ENCODE measurements at regions of chr9 and their contacts with region 1.

Region 1: GRCh38 chr9:137240861-137241489 is at the start of gene TUBB4B:
- DNase-seq: peak; percentile 99
- ATAC-seq: peak; percentile 82
- H3K4me3 Mint-ChIP-seq: peak within 1 kb of the TSS; percentile 88
- H3K27ac Mint-ChIP-seq: peak within 1 kb of the TSS; percentile 91
- H3K4me1 Mint-ChIP-seq: peaks cover 34% of the 10 kb centered on the region
- H3K27me3 Mint-ChIP-seq: no peaks in the 10 kb centered on the region
- CTCF ChIP-seq: no peak
- total RNA-seq, gene TUBB4B: 228 to 230 TPM

Region 2: DNA sequence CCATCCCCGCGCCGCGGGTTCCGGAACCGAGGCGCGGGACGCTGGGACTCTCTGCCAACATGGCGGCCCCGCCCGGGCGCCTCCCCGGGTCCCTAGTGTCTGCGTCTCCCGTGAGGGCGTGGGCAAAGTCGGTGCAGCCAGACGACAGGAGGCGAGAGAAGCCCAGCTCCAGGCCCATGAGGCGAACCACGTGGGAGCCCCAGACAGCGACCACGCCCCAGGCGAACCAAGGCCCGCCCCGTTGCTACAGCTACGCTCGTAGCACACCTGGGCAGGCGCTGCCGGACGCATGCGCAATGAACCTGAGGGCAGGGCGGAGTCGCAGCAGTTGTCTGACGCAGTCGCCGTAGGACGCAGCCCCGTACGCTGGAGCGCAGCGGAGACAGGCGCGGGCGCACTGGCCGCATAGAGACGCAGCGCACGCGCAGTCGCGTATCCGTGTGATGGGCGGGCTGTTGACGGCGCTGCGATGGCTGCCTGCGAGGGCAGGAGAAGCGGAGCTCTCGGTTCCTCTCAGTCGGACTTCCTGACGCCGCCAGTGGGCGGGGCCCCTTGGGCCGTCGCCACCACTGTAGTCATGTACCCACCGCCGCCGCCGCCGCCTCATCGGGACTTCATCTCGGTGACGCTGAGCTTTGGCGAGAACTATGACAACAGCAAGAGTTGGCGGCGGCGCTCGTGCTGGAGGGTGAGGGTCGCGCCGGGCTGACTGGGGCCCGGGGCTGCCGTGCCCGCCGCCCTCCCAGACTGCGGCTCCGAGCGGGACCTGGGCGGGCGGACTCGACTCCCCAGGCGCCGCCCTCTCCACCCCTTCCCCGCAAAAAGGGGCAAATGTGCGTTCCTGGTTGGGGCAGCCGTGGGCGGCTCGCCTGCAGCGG is 154.2 kb before region 1 on chr9 and contains the start of gene MAN1B1:
- CTCF ChIA-PET with region 1: interaction called, 14 read pairs
- POLR2A ChIA-PET with region 1: interaction called, 8 read pairs
- intact Hi-C with region 1: no loop called
- DNase-seq: peak; percentile 100
- ATAC-seq: peak; percentile 86
- H3K4me3 Mint-ChIP-seq: peak within 1 kb of the TSS; percentile 90
- H3K27ac Mint-ChIP-seq: peak within 1 kb of the TSS; percentile 94
- H3K4me1 Mint-ChIP-seq: peaks cover 38% of the 10 kb centered on the region
- H3K27me3 Mint-ChIP-seq: no peaks in the 10 kb centered on the region
- CTCF ChIP-seq: no peak
- total RNA-seq, gene MAN1B1: 31.1 to 33.2 TPM

Region 3: GRCh38 chr9:137114610-137115391 is 126.2 kb before region 1 on chr9 and contains the start of gene DPP7:
- CTCF ChIA-PET with region 1: interaction called, 14 read pairs
- POLR2A ChIA-PET with region 1: interaction called, 4 read pairs
- intact Hi-C with region 1: no loop called
- DNase-seq: peak; percentile 81
- ATAC-seq: peak; percentile 85
- H3K4me3 Mint-ChIP-seq: peak within 1 kb of the TSS; percentile 75
- H3K27ac Mint-ChIP-seq: peak within 1 kb of the TSS; percentile 64
- H3K4me1 Mint-ChIP-seq: peaks cover 10% of the 10 kb centered on the region
- H3K27me3 Mint-ChIP-seq: no peaks in the 10 kb centered on the region
- CTCF ChIP-seq: no peak
- total RNA-seq, gene DPP7: 222 to 227 TPM

Region 4: GRCh38 chr9:137188490-137189296 is 52.3 kb before region 1 on chr9 and contains the starts of genes ANAPC2 and SSNA1:
- CTCF ChIA-PET with region 1: interaction called, 11 read pairs
- POLR2A ChIA-PET with region 1: interaction called, 4 read pairs
- intact Hi-C with region 1: no loop called
- DNase-seq: peak; percentile 92
- ATAC-seq: peak; percentile 84
- H3K4me3 Mint-ChIP-seq: peak within 1 kb of the TSS; percentile 91
- H3K27ac Mint-ChIP-seq: peak within 1 kb of the TSS; percentile 94
- H3K4me1 Mint-ChIP-seq: peaks cover 32% of the 10 kb centered on the region
- H3K27me3 Mint-ChIP-seq: no peaks in the 10 kb centered on the region
- CTCF ChIP-seq: peak; percentile 53
- total RNA-seq, gene ANAPC2: 38.6 to 39.6 TPM
- total RNA-seq, gene SSNA1: 53.3 to 58.4 TPM

Region 5: GRCh38 chr9:137254624-137255447 is 13.9 kb after region 1 on chr9 and contains the start of gene NELFB:
- CTCF ChIA-PET with region 1: interaction called, 19 read pairs
- POLR2A ChIA-PET with region 1: interaction called, 113 read pairs
- intact Hi-C with region 1: no loop called
- DNase-seq: peak; percentile 93
- ATAC-seq: peak; percentile 94
- H3K4me3 Mint-ChIP-seq: peak within 1 kb of the TSS; percentile 83
- H3K27ac Mint-ChIP-seq: peak within 1 kb of the TSS; percentile 79
- H3K4me1 Mint-ChIP-seq: peaks cover 14% of the 10 kb centered on the region
- H3K27me3 Mint-ChIP-seq: no peaks in the 10 kb centered on the region
- CTCF ChIP-seq: no peak
- total RNA-seq, gene NELFB: 50.9 to 54.3 TPM